ENCODE measurements at regions of chr5 and their contacts with region 1.

Region 1: GRCh38 chr5:146965761-146966659 is 87.5 kb upstream of the PPP2R2B start:
- DNase-seq: peak; percentile 11
- H3K4me3 ChIP-seq: no peak overlapping the region
- H3K27me3 ChIP-seq: no peaks in the 10 kb centered on the region
- CTCF ChIP-seq: peak; percentile 68

Region 2: DNA sequence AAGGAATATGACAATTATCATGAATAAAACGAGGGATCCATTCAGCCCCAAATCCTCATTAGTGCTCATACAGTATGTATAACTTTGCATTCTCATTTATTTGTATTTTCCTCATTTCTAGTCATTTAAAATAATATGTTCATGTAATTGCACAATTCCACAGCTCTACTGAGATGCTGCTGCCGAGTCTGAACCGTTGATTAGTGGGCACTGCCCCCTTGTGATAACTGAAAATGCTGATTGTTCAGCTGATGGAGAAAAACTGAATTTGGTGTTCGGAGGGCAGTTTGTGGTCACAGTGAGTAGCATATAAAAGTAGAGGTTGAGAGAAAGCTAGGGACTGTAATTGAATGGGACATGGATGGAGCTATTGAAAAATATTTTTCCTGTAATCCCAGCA is 437.8 kb before region 1 on chr5:
- CTCF ChIA-PET with region 1: interaction called, 130 read pairs
- POLR2A ChIA-PET with region 1: no interaction called
- DNase-seq: no peak
- H3K4me3 ChIP-seq: no peak overlapping the region
- H3K27me3 ChIP-seq: no peaks in the 10 kb centered on the region; the same call in 1 of the 2 replicates
- CTCF ChIP-seq: 0 out of 2 replicates have a peak, but pooled peaks have one; percentile 3

Region 3: GRCh38 chr5:146533260-146533857 is 432.7 kb before region 1 on chr5:
- CTCF ChIA-PET with region 1: interaction called, 130 read pairs
- POLR2A ChIA-PET with region 1: interaction called, 3 read pairs
- DNase-seq: no peak
- H3K4me3 ChIP-seq: no peak overlapping the region
- H3K27me3 ChIP-seq: 0 out of 2 replicates have a peak, but pooled peaks cover 2% of the 10 kb centered on the region
- CTCF ChIP-seq: peak; percentile 90

Region 4: GRCh38 chr5:146541958-146542849 is 423.8 kb before region 1 on chr5:
- CTCF ChIA-PET with region 1: interaction called, 101 read pairs
- POLR2A ChIA-PET with region 1: no interaction called
- DNase-seq: no peak
- H3K4me3 ChIP-seq: no peak overlapping the region
- H3K27me3 ChIP-seq: peaks cover 3% of the 10 kb centered on the region; the same call in 1 of the 2 replicates
- CTCF ChIP-seq: peak; percentile 85

Region 5: DNA sequence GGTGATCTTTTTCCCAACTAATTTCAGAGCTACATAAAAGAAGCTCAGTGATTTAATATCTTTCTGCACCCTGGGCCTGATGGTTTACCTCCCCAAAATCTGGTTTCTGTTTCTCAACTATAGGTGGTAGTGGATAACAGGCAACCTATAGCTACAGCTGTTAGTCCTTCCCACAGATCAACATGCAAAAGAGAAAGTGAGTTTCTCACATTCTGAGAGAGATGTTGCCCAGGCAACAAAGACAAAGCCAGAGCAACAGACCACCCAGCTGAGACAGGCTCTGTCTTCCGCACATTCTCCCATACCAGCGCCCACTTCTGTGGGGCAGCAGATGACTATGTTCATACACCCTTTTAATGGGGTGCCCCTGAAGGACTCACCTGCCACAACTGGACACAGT is 46.7 kb before region 1 on chr5:
- CTCF ChIA-PET with region 1: no interaction called
- POLR2A ChIA-PET with region 1: no interaction called
- DNase-seq: no peak
- H3K4me3 ChIP-seq: no peak overlapping the region
- H3K27me3 ChIP-seq: no peaks in the 10 kb centered on the region
- CTCF ChIP-seq: no peak

Region 6: GRCh38 chr5:146948666-146949065 is 17.3 kb before region 1 on chr5:
- CTCF ChIA-PET with region 1: interaction called, 11 read pairs
- POLR2A ChIA-PET with region 1: no interaction called
- DNase-seq: no peak
- H3K4me3 ChIP-seq: no peak overlapping the region
- H3K27me3 ChIP-seq: no peaks in the 10 kb centered on the region
- CTCF ChIP-seq: no peak

Region 7: DNA sequence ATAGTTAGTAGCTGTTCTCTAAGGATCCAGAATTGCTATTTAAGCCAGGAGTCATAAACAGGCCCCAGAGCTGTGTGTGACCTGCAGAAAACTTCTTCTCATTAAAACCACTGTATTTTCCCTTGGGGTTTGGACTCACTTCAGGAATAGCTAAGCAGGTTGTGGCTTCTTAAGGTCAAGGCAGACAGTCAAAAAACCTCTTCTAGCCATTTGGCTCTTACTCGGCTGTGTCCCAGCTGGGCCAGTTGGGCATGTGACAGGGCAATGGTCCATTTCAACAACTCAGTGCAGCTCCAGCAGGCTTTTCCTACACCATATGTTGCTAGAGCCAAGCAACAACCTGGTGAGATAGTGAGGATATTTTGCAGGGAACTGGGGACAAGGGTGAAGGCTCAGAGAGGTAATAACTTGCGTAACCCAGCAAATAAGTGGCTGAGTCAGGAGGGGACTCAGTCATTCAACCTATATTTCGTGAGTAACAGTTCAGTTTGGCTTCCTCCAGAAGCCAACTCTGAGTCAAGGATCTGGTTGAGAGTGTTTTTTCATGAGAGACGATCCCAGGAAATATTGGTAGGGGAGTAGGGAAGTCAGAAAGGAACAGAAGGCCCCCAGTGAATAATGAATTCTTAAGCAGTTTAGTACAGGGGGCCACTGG is 28.0 kb after region 1 on chr5:
- CTCF ChIA-PET with region 1: no interaction called
- POLR2A ChIA-PET with region 1: no interaction called
- DNase-seq: no peak
- H3K4me3 ChIP-seq: no peak overlapping the region
- H3K27me3 ChIP-seq: no peaks in the 10 kb centered on the region
- CTCF ChIP-seq: no peak

Region 8: GRCh38 chr5:147200001-147200400 is 234.0 kb after region 1 on chr5:
- CTCF ChIA-PET with region 1: no interaction called
- POLR2A ChIA-PET with region 1: no interaction called
- DNase-seq: no peak
- H3K4me3 ChIP-seq: no peak overlapping the region
- H3K27me3 ChIP-seq: no peaks in the 10 kb centered on the region; the same call in 1 of the 2 replicates
- CTCF ChIP-seq: no peak

Measured in BJ (cell line).